OCI-LY7 (cell line): ENCODE measurements at regions of chr9 and their contacts with region 1.

Region 1: DNA sequence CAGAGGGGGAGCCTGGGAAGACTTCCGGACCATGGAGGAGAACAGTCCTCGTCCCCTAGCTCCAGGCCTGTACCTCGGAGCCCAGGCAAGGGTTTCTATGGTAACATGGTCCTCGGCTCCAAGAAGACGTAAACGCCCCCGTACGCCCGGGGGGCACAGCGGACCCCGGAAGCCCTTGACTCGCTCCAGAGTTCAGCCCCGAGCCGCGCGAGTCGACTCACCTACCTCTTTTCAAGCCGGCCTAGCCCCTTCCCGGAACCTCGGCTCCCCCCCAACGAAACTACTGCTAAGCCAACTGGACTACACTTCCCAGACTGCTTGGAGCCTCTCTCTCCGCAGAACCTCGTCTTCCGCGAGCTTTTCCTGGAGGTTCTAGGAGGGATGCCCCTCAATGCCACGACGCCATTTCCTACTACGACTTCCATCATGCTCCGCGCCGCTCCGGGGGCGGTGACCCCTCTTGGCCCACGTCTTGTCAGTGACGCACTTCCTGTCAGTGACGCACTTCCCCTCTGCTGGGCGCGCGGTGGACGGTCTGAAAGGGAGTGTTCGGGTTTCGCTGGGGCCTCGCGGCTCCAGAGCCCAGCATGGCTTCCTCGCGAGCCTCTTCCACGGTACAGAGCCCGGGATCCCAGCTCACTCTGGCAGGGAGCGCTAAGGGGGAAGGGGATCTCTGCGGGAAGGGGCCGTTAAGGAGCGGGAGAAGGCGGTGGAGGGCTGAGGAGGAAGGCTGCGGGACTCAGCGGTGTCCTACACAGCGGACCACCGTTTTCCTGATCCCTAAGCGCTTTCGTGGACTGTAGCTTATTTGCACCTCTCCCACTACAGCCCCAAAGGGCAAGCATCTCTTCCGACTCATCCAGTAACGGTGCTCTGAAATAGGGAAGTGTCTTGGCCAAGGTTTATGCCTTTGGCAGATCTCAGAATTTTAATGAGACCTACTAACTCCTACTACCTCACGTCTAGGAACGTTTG is at the starts of genes CDC26 and PRPF4:
- DNase-seq: peak; percentile 97
- H3K4me3 ChIP-seq: peak within 1 kb of the TSS; percentile 84
- H3K27ac ChIP-seq: peak within 1 kb of the TSS; percentile 68
- H3K4me1 ChIP-seq: peaks cover 29% of the 10 kb centered on the region
- CTCF ChIP-seq: no peak
- total RNA-seq, gene CDC26: 29.9 and 42.5 TPM in 2 replicates
- total RNA-seq, gene PRPF4: 27.4 and 27.8 TPM in 2 replicates

Region 2: DNA sequence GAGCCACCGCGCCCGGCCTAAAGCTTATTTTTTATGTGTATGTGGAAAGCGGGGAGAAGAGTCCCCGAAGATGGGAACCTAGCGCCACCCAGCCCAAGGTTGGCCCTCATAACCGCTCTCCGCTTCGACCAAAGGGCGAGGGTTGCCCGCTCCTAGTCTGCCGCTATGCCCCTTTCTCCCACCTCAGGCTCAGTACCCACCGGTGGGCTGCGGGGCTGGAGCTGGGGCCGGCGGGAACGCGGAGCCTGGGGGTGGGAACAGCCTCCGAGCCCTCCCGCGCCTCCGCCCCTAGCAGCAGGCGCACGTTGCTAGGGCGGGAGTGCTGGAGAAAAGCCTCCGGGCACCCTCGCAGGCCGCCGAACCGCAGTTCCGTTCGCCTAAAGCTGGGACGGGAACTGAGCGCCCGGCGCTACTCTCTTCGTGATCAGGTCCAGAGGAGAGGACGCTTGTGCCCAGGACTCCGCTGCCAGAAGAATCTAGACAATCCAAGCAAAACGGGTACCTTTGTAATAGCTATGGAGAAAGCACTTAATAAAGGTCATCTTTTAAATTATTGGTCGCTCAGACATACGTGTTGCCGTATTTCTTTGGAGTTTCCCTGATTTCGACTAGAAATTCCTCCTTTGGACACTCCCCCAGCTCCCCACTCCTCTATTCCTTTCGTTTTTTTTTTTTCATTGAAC is 64.7 kb after region 1 on chr9 and contains the start of gene WDR31:
- CTCF ChIA-PET with region 1: no interaction called
- POLR2A ChIA-PET with region 1: interaction called, 7 read pairs
- intact Hi-C with region 1: loop called (anchors 1 kb)
- DNase-seq: peak; percentile 71
- H3K4me3 ChIP-seq: peak within 1 kb of the TSS; percentile 70
- H3K27ac ChIP-seq: no peak within 1 kb of the TSS
- H3K4me1 ChIP-seq: no peaks in the 10 kb centered on the region
- CTCF ChIP-seq: no peak
- total RNA-seq, gene WDR31: 0.19 and 0.54 TPM in 2 replicates

Region 3: GRCh38 chr9:113564498-113565237 is 289.2 kb after region 1 on chr9:
- CTCF ChIA-PET with region 1: no interaction called
- POLR2A ChIA-PET with region 1: no interaction called
- intact Hi-C with region 1: no loop called
- DNase-seq: no peak
- H3K4me3 ChIP-seq: no peak overlapping the region
- H3K27ac ChIP-seq: no peak overlapping the region
- H3K4me1 ChIP-seq: peaks cover 12% of the 10 kb centered on the region
- CTCF ChIP-seq: no peak

Region 4: GRCh38 chr9:113876151-113876992 is 600.9 kb after region 1 on chr9 and contains the start of gene ZNF618:
- CTCF ChIA-PET with region 1: no interaction called
- POLR2A ChIA-PET with region 1: no interaction called
- intact Hi-C with region 1: no loop called
- DNase-seq: peak; percentile 48
- H3K4me3 ChIP-seq: peak within 1 kb of the TSS; percentile 71
- H3K27ac ChIP-seq: no peak within 1 kb of the TSS
- H3K4me1 ChIP-seq: no peaks in the 10 kb centered on the region
- CTCF ChIP-seq: peak; percentile 80
- total RNA-seq, gene ZNF618: not detected in 2 replicates